Astrocyte of the cerebellum (primary cell): ENCODE measurements at regions of chr22 and their contacts with region 1.

Region 1: GRCh38 chr22:36775964-36776669 is at the start of gene IFT27:
- DNase-seq: peak; percentile 100
- H3K4me3 ChIP-seq: peak within 1 kb of the TSS; percentile 80
- CTCF ChIP-seq: no peak

Region 2: DNA sequence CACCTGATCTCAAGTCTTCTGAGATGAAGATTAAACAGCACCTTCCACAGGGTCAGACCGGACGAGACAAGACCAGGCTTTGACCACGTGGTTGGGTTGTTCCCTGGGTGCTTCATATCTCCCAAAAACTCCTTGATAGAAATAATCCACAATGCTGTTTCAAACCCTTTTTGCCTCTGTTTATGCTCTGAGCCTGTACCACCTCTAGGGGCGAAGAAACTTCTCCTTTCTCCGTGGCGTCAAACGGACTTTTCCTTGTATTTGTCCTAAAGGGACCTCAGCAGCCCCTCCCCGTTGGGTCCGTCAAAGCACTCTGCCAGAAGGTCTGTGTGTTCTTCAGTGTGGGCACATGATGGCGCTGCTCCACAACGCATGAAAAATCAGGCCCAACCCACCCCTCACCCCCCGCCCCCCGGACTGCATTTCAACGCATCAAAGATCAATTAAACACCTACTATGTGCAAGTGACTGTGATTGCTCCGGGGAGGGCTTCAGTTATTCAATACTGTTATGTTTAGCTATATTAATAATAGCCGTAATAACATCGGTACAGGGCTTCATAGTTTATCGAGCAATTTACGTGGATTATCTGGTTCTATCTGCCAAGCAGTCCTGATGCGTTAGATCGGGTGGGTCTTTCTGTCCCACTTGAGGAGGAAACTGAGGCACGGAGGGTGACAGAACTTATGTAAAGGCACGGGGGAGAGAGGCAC is 229.9 kb before region 1 on chr22:
- in situ Hi-C with region 1: loop called (anchors 10 kb)
- DNase-seq: peak; percentile 43
- H3K4me3 ChIP-seq: no peak overlapping the region
- CTCF ChIP-seq: peak; percentile 56

Region 3: GRCh38 chr22:36671404-36671803 is 104.7 kb before region 1 on chr22:
- in situ Hi-C with region 1: no loop called
- DNase-seq: no peak
- H3K4me3 ChIP-seq: no peak overlapping the region
- CTCF ChIP-seq: no peak

Region 4: DNA sequence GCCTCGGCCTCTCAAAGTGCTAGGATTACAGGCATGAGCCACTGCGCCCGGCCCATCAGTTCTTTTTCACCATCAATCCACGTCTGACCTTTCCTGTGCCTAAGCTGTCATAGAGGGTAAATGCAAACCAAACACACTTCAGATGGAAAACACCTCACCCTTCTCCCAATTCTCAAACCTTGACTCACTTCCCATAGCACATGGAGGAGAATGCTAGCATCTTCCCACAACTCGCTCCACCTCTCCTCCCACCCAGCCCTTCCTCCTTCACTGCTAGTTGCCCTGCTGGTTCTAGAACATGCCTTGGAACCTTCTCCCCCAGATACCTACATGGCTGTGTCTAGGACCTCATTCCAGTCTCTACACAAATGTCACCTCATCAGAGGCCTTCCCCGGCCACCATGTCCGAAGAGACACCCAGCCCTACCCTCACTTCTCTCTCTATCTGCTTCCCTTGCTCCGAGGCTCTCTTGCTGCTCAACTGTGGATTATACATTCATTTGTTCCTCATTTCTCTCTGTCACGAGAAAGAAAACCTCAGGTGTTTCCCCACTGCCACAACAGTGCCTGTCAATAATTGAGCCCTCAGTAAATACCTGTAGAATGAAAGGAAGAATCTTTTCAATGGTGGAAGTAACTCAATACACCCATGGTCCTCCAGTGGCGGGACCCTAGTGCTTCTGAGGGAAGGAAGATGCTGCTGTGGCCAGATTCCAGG is 63.4 kb after region 1 on chr22:
- in situ Hi-C with region 1: loop called (anchors 5 kb)
- DNase-seq: no peak
- H3K4me3 ChIP-seq: no peak overlapping the region
- CTCF ChIP-seq: no peak

Region 5: GRCh38 chr22:36853407-36854099 is 77.4 kb after region 1 on chr22:
- in situ Hi-C with region 1: no loop called
- DNase-seq: no peak
- H3K4me3 ChIP-seq: no peak overlapping the region
- CTCF ChIP-seq: peak; percentile 58